ENCODE measurements at regions of chr3 and their contacts with region 1.

Region 1: DNA sequence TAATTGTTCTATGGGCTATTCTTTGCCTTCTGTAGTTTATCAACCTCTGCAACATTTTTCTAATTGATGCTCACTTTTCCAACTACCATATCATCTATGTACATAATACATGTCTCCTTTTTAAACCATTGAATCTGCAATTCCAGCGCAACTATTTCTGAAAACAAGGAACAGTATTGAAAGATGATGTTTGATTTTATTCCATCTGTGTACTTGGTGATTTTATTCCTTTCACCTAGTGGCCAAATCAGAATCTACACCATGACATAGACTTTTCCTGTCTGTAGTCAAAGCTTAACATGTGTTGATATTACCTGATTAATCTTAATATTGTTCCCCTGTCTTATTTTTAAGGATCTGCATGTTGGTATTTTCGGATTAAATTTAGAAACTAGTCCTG is 13.0 kb downstream of the NKTR start:
- DNase-seq: peak in 3 of 4 experiments; percentile 38 to 39 (median 39)
- ATAC-seq: peak; percentile 69
- H3K4me3 ChIP-seq: no peak overlapping the region
- H3K27ac ChIP-seq: peak overlapping the region; percentile 38; the same call in 1 of the 3 replicates
- H3K4me1 ChIP-seq: peaks cover 0 to 6% of the 10 kb centered on the region in 2 experiments; a peak in 2 of 5 replicates
- H3K27me3 ChIP-seq: no peaks in the 10 kb centered on the region
- CTCF ChIP-seq: peak in 1 of 3 experiments; percentile 42; a peak in 3 of 6 replicates
- EP300 ChIP-seq: no peak
- POLR2A ChIP-seq: no peak
- RAD21 ChIP-seq: 0 out of 4 replicates have a peak, but pooled peaks of 1 of the 2 experiments have one; percentile 5

Region 2: DNA sequence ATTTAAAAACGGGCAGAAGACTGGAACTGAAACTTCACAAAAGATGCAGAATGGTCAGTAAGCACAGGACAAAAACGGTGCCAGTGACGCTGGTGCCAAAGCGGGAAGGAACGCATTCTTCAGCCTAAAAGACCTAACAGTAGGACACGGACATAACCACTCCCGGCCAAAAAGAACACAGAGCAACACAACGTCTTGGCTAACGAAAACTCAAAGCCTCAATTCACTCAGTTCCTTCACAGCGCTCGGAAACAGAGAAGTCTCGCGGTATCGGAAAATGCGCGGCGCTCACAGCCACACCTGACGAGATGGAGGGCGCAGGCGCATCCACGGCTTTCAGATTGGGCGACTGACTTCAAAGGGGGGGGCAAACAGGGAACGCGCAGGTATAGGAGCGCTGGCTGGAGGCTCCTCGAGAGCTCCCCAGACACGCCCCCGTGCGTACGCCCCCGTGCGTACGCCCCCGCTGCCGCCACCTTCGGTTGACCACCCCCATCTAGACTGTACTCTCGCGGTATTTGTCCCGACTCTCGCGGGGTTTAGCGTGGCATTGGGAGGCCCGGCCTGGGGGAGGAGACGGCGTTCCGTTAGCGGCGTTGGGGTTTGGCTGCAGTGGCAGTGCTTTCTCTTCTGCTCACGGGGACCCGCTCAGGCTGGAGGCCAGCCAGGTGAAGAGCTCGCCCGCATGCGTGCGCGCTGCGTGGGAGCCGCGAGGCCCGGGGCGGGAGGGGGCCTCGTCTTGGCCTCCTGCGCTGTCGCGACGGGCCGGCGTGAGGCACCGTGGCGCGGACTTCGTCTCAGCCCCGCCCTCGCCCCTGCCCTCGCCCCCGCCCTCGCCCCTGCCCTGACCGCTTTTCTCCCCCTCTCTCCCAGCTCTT is 13.1 kb before region 1 on chr3 and contains the start of gene NKTR:
- CTCF ChIA-PET with region 1: no interaction called
- POLR2A ChIA-PET with region 1: interaction called, 13 read pairs
- in situ Hi-C with region 1: no loop called
- intact Hi-C with region 1: no loop called
- DNase-seq: peak; percentile 96 to 100 (median 98)
- ATAC-seq: peak; percentile 85
- H3K4me3 ChIP-seq: peak within 1 kb of the TSS; percentile 85
- H3K27ac ChIP-seq: peak within 1 kb of the TSS; percentile 95
- H3K4me1 ChIP-seq: peaks cover 12 to 13% of the 10 kb centered on the region in 2 experiments; a peak in 4 of 5 replicates
- H3K27me3 ChIP-seq: no peaks in the 10 kb centered on the region
- CTCF ChIP-seq: peak in 2 of 3 experiments; percentile 26 to 45; a peak in 2 of 6 replicates
- EP300 ChIP-seq: peak; percentile 73
- POLR2A ChIP-seq: peak; percentile 97
- RAD21 ChIP-seq: peak in 1 of 2 experiments; percentile 5; a peak in 1 of 4 replicates
- polyA plus RNA-seq, gene NKTR: 19.7 to 30.2 TPM

Measured in K562 (cell line).